Prostate gland (tissue), 2 donors: ENCODE measurements at regions of chr7 and their contacts with region 1.

Region 1: DNA sequence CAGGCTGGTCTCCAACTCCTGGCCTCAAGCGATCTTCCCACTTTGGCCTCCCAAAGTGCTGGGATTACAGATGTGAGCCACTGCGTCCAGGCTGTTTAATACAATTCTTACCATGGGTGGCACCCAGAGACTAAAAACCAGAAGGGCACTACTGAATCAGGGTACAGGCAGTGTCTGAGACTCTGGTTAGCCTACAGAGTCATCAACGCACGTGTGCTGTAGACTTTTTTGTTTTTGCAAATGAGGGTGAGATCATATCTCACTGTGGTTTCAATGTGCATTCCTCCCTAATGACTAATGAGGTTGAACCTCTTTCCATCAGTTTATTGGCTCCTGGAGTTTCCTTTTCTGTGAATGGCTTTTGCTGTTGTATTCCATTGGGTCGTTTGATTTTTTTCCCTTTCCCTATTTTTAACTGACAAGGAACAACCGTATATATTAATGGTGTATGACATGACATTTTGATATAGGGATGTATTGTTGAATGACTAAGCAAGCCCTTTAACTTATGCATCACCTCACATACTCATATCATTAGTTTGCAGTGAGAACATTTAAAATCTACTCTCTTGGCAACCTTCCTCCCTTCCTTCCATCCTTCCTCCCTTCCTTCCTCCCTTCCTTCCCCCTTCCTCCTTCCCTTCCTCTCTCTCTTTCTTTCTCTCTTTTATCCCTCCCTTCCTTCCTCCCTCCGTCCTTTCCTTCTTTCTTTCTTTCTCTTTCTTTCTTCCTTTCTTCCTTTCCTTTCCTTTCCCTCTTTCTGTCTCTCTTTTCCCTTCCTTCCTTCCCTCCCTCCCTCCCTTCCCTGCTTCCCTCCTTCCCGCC is 9.3 kb upstream of the METTL27 start:
- DNase-seq: no peak
- H3K4me3 ChIP-seq: no peak overlapping the region
- H3K27ac ChIP-seq: peak overlapping the region in 1 of 2 donors; percentile 20
- H3K4me1 ChIP-seq: no peaks in the 10 kb centered on the region
- H3K27me3 ChIP-seq: no peaks in the 10 kb centered on the region
- CTCF ChIP-seq: no peak
- POLR2A ChIP-seq: no peak

Region 2: DNA sequence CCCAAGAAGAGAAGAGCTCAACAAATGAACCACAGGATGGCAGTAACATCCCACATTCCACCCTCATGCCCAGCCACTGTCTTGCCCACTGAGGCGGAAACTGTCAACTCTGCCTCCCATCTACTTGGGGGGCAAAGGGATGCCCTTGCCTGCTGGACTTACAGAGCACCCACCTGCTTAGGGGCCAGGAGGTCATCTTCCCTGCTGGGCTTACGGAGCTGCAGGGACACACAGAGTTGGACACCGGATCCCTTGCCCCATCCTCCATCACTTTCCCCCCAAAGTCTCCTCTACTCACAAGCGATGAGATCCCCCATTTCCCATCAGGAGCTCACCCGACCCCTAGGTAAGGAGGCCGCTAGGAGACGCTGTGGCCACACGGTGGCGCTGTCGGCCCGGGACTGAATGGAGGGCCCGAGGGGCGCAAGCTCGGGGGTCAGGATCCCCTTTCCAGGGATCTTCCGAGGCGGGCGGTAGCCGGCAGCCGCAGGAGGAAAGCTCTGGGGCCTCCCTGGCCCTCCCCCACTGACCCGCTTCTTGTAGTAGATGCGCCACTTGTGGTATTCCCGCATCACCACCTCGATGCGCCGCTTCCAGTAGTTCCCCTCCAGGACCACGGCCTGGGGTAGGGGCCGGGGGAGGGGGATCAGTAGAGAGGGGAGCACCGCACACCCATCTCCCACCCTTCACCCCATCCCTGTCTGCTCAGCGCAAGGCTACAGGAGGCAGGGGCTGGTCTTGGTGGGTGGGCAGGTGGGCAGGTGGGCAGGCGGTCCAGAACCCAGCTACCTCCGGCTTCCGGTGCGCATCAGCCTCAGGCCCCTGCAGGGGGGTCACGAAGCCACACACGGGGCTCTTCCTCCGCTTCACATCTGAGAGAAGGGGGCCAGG is 244.6 kb before region 1 on chr7:
- intact Hi-C with region 1: loop called (anchors 10 kb)
- DNase-seq: no peak
- H3K4me3 ChIP-seq: no peak overlapping the region
- H3K27ac ChIP-seq: no peak overlapping the region
- H3K4me1 ChIP-seq: no peaks in the 10 kb centered on the region
- H3K27me3 ChIP-seq: no peaks in the 10 kb centered on the region
- CTCF ChIP-seq: peak; percentile 85 to 97 (median 91)
- POLR2A ChIP-seq: no peak

Region 3: GRCh38 chr7:73707142-73707595 is 144.5 kb before region 1 on chr7:
- intact Hi-C with region 1: no loop called
- DNase-seq: peak; percentile 73
- H3K4me3 ChIP-seq: no peak overlapping the region
- H3K27ac ChIP-seq: no peak overlapping the region
- H3K4me1 ChIP-seq: peaks cover 6% of the 10 kb centered on the region
- H3K27me3 ChIP-seq: no peaks in the 10 kb centered on the region
- CTCF ChIP-seq: no peak
- POLR2A ChIP-seq: peak; percentile 26

Region 4: GRCh38 chr7:73742693-73743595 is 108.7 kb before region 1 on chr7:
- intact Hi-C with region 1: loop called (anchors 5 kb)
- DNase-seq: peak; percentile 71
- H3K4me3 ChIP-seq: no peak overlapping the region
- H3K27ac ChIP-seq: peak overlapping the region; percentile 89 to 92
- H3K4me1 ChIP-seq: peaks cover 15% of the 10 kb centered on the region
- H3K27me3 ChIP-seq: no peaks in the 10 kb centered on the region
- CTCF ChIP-seq: no peak
- POLR2A ChIP-seq: no peak